ENCODE measurements at regions of chr2 and their contacts with region 1.

Region 1: DNA sequence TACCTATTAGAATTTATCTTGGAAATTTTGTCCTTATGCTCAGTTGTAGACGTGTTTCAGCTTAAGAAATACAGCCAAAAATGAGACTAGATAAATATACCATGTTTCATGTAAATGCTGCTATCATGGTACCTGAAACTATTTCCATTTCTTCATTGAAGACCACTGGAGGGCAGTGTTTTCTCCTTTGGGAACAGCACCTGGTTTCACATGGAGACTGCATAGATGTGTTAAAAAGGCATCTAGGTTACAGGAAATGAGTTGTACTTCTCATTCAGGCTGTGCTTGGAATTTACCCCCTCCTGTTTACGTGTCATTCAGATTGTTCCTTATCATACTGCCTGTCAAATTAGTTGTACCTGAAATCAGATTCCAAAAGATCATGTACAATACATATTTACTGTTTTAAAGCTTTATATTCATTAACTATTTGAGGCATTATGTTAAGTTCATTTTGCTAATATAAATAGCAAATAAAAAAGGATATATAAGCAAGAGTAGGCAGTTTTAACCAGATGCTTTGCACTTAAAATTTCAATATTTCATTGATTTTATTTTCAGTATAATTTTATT is 57.3 kb upstream of the PSMD14 start:
- H3K4me3 ChIP-seq: no peak overlapping the region
- H3K27ac ChIP-seq: no peak overlapping the region
- H3K4me1 ChIP-seq: no peaks in the 10 kb centered on the region
- CTCF ChIP-seq: 0 out of 2 replicates have a peak, but pooled peaks have one; percentile 26

Region 2: GRCh38 chr2:160970052-160970965 is 280.6 kb before region 1 on chr2:
- CTCF ChIA-PET with region 1: no interaction called
- POLR2A ChIA-PET with region 1: no interaction called
- H3K4me3 ChIP-seq: no peak overlapping the region
- H3K27ac ChIP-seq: no peak overlapping the region
- H3K4me1 ChIP-seq: no peaks in the 10 kb centered on the region
- CTCF ChIP-seq: peak; percentile 53; the same call in 1 of the 2 replicates

Region 3: GRCh38 chr2:161223139-161223732 is 27.7 kb before region 1 on chr2:
- CTCF ChIA-PET with region 1: interaction called, 29 read pairs
- POLR2A ChIA-PET with region 1: no interaction called
- H3K4me3 ChIP-seq: no peak overlapping the region
- H3K27ac ChIP-seq: no peak overlapping the region
- H3K4me1 ChIP-seq: no peaks in the 10 kb centered on the region
- CTCF ChIP-seq: no peak

Region 4: GRCh38 chr2:161230959-161231358 is 20.0 kb before region 1 on chr2:
- CTCF ChIA-PET with region 1: interaction called, 16 read pairs
- POLR2A ChIA-PET with region 1: no interaction called
- H3K4me3 ChIP-seq: no peak overlapping the region
- H3K27ac ChIP-seq: no peak overlapping the region
- H3K4me1 ChIP-seq: no peaks in the 10 kb centered on the region
- CTCF ChIP-seq: no peak

Region 5: DNA sequence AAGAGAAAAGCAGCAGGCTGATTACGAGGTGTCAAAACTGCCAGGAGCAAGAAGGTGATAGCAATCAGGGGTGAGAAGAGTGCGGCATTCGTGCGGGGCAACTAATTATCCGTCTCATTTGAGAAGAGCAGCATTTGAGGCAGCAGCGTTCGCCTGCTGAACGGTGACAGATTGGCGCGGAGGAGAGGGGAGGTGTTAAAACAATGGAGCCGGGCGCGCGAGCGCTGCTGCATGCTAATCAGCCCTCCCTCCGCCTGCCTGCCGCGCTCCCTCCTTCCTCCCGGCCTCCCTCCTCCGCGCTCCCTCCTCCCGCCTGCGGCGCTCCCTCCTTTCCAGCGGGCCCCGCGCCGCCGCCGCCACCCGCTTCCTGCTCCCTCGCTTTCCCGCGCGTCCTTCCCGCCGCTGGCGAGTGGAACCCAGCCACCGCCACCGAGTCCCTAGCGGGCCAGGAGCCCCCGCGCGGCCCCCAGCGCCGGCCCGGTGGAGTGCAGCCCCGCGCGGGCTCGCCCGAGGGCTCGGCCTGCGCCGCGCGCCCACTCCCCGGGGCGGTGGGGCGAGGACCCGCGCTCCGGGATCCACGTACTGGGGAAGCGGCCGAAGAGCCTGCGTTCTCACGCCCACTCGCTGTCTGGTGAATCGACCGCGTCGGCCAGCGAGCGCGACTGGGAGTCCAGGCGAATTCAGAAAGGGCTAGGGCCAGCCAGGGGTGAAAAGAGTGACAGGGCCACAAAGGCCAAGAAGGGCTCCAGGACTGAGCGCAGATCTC is 12.2 kb before region 1 on chr2:
- CTCF ChIA-PET with region 1: interaction called, 36 read pairs
- POLR2A ChIA-PET with region 1: no interaction called
- H3K4me3 ChIP-seq: peak overlapping the region; percentile 42
- H3K27ac ChIP-seq: no peak overlapping the region; the same call in 1 of the 2 replicates
- H3K4me1 ChIP-seq: no peaks in the 10 kb centered on the region
- CTCF ChIP-seq: peak; percentile 13; the same call in 1 of the 2 replicates

Region 6: GRCh38 chr2:161265874-161266273 is 14.9 kb after region 1 on chr2:
- CTCF ChIA-PET with region 1: interaction called, 18 read pairs
- POLR2A ChIA-PET with region 1: no interaction called
- H3K4me3 ChIP-seq: no peak overlapping the region
- H3K27ac ChIP-seq: no peak overlapping the region
- H3K4me1 ChIP-seq: no peaks in the 10 kb centered on the region
- CTCF ChIP-seq: no peak

Region 7: DNA sequence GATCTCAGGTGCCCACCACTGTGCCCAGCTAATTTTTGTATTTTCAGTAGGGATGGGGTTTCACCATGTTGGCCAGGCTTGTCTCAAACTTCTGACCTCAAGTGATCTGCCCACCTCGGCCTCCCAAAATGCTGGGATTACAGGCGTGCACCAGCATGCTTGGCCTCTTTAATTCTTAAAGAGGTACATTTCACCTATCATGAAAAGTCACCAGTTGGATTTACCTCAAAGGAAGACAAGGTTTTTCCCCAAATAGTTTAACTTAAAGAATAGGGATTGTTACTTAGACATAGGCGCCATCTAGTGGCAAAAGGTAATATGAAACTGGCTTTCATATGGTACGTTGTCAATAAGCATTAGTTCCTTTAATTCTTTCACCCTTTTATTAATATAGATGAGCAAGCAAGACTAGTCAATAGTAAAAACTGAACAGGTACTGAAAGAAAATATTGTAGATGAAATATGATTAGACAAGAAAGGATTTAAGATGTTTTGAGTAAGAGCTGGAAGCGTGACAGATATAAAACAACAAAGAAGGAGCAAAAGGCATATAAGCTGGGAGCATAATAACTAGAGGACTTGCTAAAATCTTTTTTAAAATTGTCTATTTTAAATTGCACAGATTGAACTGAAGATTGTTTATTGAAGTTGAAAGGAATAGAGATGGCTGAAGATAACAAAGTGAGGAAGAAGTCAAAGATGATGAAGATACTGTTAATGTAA is 22.2 kb after region 1 on chr2:
- CTCF ChIA-PET with region 1: interaction called, 18 read pairs
- POLR2A ChIA-PET with region 1: interaction called, 6 read pairs
- H3K4me3 ChIP-seq: no peak overlapping the region
- H3K27ac ChIP-seq: no peak overlapping the region
- H3K4me1 ChIP-seq: no peaks in the 10 kb centered on the region
- CTCF ChIP-seq: peak; percentile 53

Measured in HEK293 (cell line).